ENCODE measurements at regions of chr16 and their contacts with region 1.

Region 1: GRCh38 chr16:67561824-67562525 is 351 bp upstream of the CTCF start:
- DNase-seq: peak; percentile 98
- H3K4me3 ChIP-seq: peak overlapping the region; percentile 66 to 90 (median 67)
- H3K27ac ChIP-seq: peak overlapping the region; percentile 60
- H3K4me1 ChIP-seq: peaks cover 20% of the 10 kb centered on the region
- H3K27me3 ChIP-seq: no peaks in the 10 kb centered on the region
- CTCF ChIP-seq: no peak

Region 2: DNA sequence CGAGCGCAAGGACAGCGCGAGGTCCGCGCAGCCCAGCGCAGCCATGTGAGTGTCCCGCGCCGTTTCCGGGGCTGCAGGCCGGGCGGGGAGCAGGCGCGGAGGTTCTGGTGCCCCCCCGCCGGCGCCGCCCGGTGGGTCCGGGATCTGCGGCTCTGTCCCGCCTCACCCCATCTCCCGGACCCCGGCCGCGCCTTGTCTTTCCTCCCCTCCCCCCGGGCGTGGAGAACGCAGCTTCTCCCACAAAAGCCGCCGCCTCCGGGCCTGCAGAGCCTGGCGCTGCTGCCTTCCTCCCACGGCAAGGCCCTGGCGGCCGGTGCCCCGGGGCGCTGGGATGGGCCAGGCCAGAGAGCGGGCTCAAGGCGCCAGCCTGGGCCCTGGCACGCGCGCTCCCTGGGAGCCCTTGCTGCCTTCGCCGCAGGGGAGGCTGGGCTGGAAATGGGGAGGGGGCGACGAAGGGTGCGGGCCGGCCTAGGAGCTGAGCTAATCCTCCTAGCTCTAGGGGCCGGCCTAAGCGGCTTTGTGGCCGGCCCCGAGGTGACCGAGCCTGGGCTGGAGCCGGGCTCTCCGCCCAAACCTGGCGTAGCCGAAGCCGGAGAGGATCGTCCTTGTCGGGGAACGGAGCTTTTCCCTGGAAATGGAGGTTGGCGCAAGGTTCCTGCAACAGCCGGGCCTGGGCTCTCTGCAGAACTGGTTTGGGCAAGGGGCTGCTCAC is 32.9 kb before region 1 on chr16:
- CTCF ChIA-PET with region 1: no interaction called
- dilution Hi-C with region 1: no loop called
- in situ Hi-C with region 1: no loop called
- intact Hi-C with region 1: loop called (anchors 1 kb)
- DNase-seq: peak; percentile 46
- H3K4me3 ChIP-seq: peak overlapping the region; percentile 57 to 67 (median 61)
- H3K27ac ChIP-seq: peak overlapping the region; percentile 41
- H3K4me1 ChIP-seq: peaks cover 45% of the 10 kb centered on the region
- H3K27me3 ChIP-seq: no peaks in the 10 kb centered on the region
- CTCF ChIP-seq: no peak

Region 3: DNA sequence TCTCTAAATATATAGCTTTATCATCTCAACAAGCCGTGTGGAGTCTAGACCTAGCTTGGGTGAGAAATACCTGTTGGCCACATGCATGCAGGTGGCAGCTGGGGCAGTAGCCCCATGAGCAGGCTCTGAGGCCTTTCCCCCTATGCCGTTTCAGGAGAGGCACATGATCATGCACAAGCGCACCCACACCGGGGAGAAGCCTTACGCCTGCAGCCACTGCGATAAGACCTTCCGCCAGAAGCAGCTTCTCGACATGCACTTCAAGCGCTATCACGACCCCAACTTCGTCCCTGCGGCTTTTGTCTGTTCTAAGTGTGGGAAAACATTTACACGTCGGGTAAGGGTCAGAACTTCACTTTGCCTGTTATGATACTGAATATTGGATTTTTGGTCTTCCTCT is 66.2 kb after region 1 on chr16:
- CTCF ChIA-PET with region 1: no interaction called
- dilution Hi-C with region 1: no loop called
- in situ Hi-C with region 1: no loop called
- intact Hi-C with region 1: no loop called
- DNase-seq: no peak
- H3K4me3 ChIP-seq: no peak overlapping the region
- H3K27ac ChIP-seq: no peak overlapping the region
- H3K4me1 ChIP-seq: no peaks in the 10 kb centered on the region
- H3K27me3 ChIP-seq: no peaks in the 10 kb centered on the region
- CTCF ChIP-seq: no peak

Region 4: DNA sequence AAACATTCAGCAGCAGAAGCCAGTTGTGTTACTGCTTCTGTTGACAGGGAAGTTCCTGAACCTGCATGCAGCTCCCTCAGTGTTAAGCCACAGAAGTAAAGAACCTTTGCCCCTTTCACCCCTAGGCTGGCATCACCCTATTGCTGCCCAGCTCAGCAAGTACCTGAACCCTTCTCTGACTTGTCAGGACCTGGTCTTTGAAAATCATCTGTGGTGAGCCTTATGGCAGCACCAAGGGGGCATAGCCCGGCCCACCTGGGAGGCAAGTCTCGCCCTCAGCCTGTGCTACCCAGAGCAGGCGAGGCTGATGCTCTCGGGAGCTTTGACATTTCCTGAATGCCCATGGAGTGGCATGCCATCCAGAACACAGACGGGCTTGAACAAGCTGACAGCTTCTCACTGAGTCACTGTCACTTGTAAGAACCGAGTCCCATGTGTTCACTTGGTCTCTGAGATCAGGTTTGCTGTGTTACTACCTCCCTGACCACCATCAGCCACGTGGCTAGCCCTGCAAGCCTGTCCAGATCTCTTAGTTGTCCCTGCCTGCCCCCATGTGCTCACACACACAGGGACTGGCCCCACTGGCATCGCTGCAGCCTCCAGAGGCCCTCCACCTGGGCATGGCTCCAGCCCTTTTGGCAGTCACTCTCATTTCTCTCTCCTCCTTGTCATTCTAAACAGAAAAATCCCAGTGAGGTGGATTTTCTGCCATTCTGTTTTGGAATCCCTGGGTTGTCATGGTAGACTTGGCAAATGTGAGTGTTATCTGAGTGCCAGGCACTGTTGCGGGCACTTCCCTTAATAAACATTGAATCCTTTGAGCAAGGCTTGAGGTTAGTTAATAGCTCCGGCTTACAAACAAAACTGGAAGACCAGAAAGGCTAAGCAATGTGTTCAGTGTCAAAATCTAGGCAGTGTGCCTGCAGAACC is 80.1 kb after region 1 on chr16:
- CTCF ChIA-PET with region 1: interaction called, 4 read pairs
- dilution Hi-C with region 1: no loop called
- in situ Hi-C with region 1: no loop called
- intact Hi-C with region 1: loop called (anchors 1 kb)
- DNase-seq: peak; percentile 52
- H3K4me3 ChIP-seq: no peak overlapping the region
- H3K27ac ChIP-seq: no peak overlapping the region
- H3K4me1 ChIP-seq: peaks cover 12% of the 10 kb centered on the region
- H3K27me3 ChIP-seq: no peaks in the 10 kb centered on the region
- CTCF ChIP-seq: peak in 1 of 2 donors; percentile 10

Region 5: DNA sequence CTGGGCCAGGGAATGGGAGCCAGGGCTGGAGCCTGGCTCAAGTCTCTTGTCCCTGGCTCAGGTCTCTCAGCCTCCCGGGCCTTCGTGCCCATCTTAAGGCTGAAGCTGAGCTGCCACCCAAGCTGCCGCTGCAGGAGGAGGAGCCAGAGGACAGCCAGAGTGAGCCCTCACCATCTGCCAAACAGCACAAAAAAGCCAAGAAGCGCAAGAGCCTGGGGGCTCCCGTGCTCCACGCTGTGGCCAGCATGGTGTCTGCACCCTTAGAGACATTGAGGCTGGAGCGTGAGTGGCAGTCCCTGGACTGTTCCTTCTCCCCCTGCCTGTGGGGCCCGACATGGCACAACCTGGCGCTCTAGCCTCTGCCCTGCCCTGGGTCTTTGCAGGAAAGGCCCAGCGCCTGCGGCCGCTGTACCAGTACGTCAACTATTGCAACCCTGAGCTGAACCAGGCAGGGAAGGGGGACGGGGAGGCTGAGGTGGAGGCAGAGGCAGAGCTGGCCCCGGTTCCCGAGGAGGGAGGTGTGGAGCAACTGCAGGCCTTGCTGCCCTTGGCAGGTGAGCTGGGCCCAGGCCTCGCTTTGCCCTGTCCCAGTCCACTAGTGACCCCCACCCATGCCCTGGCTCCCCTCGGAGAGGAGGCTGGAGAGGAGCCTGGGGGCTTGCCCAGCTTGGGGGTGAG is 106.0 kb after region 1 on chr16:
- CTCF ChIA-PET with region 1: no interaction called
- dilution Hi-C with region 1: no loop called
- in situ Hi-C with region 1: loop called (anchors 10 to 25 kb)
- intact Hi-C with region 1: loop called (anchors 1 kb)
- DNase-seq: peak; percentile 81
- H3K4me3 ChIP-seq: no peak overlapping the region
- H3K27ac ChIP-seq: no peak overlapping the region
- H3K4me1 ChIP-seq: peaks cover 19% of the 10 kb centered on the region
- H3K27me3 ChIP-seq: no peaks in the 10 kb centered on the region
- CTCF ChIP-seq: peak; percentile 94 to 95

Region 6: GRCh38 chr16:67928561-67929364 is 366.8 kb after region 1 on chr16:
- CTCF ChIA-PET with region 1: no interaction called
- dilution Hi-C with region 1: no loop called
- in situ Hi-C with region 1: no loop called
- intact Hi-C with region 1: loop called (anchors 1 kb)
- DNase-seq: peak; percentile 49
- H3K4me3 ChIP-seq: no peak overlapping the region
- H3K27ac ChIP-seq: no peak overlapping the region
- H3K4me1 ChIP-seq: no peaks in the 10 kb centered on the region
- H3K27me3 ChIP-seq: no peaks in the 10 kb centered on the region
- CTCF ChIP-seq: peak; percentile 94 to 95